ENCODE measurements at regions of chr5 and their contacts with region 1.

Region 1: DNA sequence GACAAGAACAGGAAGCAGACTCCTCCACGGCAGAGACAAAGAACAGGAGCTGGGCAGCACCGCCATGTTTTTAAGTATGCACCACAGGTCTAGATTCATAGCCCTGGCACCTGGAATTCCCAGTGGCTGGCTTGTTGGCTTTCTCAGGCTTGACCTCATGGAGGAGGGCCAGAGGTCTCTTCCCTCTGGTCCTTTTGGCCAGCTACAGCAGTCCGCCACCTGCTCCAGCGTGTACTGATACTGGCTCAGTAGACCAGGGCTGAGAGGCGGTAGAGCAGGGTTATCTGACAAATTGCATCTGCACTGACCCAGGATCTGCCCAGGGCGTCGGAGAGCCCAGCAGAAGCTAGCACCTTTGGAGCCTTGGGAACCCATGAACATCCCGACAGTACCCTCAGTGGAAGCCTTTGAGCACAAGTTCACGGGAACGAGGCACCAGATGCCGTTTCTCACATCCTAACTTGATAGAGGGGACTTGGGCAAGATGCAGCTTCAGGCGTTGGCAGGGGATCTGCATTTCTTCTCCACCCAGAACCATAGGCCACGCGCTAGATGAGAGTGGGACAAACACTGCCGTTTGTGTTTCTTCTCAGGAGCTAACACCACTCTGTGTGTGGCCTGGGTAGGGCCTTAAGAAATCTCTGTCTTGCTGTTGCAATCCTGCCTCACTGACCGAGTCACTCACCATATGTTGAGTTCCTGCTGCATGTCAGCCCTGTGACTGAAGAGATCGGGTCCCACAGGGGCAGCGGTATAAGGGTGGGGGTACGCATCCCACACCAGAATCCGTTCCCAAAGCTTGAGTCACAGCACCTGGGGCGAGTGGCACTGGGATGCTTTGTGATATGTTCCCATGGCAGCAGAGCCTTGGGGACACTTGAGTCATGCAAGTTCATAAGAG is 90.3 kb upstream of the OTULINL start:
- DNase-seq: peak; percentile 70 to 77 (median 76)
- H3K4me3 ChIP-seq: peak overlapping the region in 1 of 3 experiments; percentile 41
- H3K4me3 Mint-ChIP-seq: peak overlapping the region; percentile 45 to 83
- H3K27ac ChIP-seq: peak overlapping the region; percentile 91 to 95
- H3K27ac Mint-ChIP-seq: peak overlapping the region; percentile 90 to 97 (median 96)
- H3K4me1 ChIP-seq: peaks cover 70 to 72% of the 10 kb centered on the region in 2 donors
- H3K4me1 Mint-ChIP-seq: peaks cover 69% of the 10 kb centered on the region
- H3K27me3 ChIP-seq: no peaks in the 10 kb centered on the region
- H3K27me3 Mint-ChIP-seq: no peaks in the 10 kb centered on the region
- CTCF ChIP-seq: no peak

Region 2: DNA sequence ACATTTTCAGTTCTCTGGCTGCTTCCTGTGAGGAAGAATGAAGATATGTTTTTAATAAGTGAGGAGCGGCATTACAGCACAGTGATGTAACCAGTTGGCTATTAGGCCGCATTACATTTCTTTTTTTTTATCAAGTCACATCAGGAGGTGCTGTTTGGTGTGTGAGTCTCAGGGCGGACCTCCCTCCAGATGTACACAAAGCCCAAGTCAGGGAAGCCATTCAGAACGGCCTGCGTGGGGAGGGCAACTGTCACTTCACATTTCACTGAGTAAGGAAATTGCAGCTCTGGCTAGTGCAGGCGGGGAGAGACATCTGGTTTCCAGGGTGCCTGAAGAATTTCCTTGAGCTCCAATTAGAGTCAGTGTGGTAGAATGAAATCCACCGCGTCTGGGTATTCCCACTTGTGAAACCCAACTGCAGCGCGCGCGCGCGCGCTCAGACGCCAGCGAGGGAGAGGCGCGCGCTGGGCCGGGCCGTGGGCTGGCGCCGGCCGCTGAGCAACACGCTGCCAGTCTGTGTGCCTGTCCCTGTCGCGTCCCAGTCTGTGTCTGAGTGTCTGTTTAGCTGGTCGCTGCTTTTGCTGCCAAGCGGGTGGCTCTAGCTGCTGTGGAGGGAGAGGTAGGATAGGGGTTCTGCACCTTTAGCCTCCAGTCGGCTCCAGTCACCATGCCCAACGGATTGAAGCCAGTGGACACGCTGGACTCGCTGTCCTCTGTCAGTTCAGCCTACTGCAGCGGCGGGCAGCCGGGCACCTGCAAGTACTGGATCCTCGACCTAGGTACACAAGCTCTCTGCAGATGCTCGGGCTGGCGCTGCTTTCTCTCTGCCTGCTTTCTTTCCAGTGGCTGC is 50.5 kb before region 1 on chr5:
- intact Hi-C with region 1: no loop called
- DNase-seq: no peak
- H3K4me3 ChIP-seq: no peak overlapping the region
- H3K4me3 Mint-ChIP-seq: no peak overlapping the region
- H3K27ac ChIP-seq: no peak overlapping the region
- H3K27ac Mint-ChIP-seq: peak overlapping the region in 1 of 7 donors; percentile 36
- H3K4me1 ChIP-seq: peaks cover 4 to 7% of the 10 kb centered on the region in 2 donors
- H3K4me1 Mint-ChIP-seq: peaks cover 19% of the 10 kb centered on the region
- H3K27me3 ChIP-seq: no peaks in the 10 kb centered on the region
- H3K27me3 Mint-ChIP-seq: peaks cover 0 to 2% (median 2%) of the 10 kb centered on the region in 3 donors
- CTCF ChIP-seq: no peak

Region 3: GRCh38 chr5:14588145-14588544 is 96.9 kb after region 1 on chr5:
- intact Hi-C with region 1: loop called in 1 of 2 experiments (anchors 5 kb)
- DNase-seq: peak; percentile 47 to 84 (median 75)
- H3K4me3 ChIP-seq: peak overlapping the region in 1 of 3 experiments; percentile 41
- H3K4me3 Mint-ChIP-seq: peak overlapping the region in 1 of 2 donors; percentile 16
- H3K27ac ChIP-seq: peak overlapping the region; percentile 55 to 91
- H3K27ac Mint-ChIP-seq: peak overlapping the region; percentile 92 to 97 (median 95)
- H3K4me1 ChIP-seq: peaks cover 92 to 99% of the 10 kb centered on the region in 2 donors
- H3K4me1 Mint-ChIP-seq: peaks cover 94% of the 10 kb centered on the region
- H3K27me3 ChIP-seq: no peaks in the 10 kb centered on the region
- H3K27me3 Mint-ChIP-seq: no peaks in the 10 kb centered on the region
- CTCF ChIP-seq: no peak

Measured in CD14-positive monocyte (primary cell).